B cell (primary cell): ENCODE measurements at regions of chrX and their contacts with region 1.

Region 1: DNA sequence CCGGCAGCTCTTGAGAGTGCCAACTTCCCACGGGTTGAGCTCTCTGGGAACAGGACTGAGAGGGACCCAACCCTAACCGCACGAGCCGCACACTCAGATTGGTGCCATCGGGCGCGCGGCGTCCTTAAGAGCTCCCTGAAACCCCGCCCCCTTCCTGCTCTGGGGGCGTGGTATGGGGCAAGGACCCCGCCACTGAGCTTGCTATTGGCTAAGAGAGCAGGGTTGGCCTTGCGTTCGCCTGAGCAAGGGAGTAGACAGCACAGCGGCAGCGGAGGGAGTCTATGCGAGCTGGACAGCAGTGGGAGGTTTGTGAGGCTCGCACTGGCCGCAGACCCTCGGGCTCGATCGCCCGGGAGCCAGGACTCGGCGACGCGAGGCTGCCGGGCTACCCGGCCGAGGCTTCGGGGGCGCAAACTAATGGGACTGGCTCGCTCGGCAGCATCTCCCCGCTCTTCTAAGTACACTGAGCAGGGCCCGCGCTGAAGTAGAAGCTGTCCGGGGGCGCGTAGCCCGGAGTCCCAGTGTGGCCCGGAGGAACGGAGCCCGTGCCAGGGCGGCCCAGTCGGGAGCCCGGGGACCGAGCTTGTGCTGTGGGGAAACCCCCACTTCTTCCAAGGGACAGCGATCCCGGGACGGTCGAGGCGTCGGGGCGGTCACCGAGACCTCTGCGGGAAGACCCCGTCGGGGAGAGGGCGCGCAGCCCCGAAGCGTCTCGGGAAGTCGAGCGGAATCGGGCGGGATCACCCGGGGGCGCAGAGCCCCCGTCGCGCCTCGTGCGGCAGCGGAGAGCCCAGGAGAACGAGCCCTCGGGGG is at the start of gene EFNB1:
- DNase-seq: peak; percentile 91
- ATAC-seq: peak; percentile 92
- H3K4me3 ChIP-seq: peak within 1 kb of the TSS; percentile 58 to 80 (median 75)
- H3K4me3 Mint-ChIP-seq: peak within 1 kb of the TSS; percentile 97
- H3K27ac ChIP-seq: no peak within 1 kb of the TSS
- H3K27ac Mint-ChIP-seq: peak within 1 kb of the TSS; percentile 77
- H3K4me1 ChIP-seq: peaks cover 12 to 34% of the 10 kb centered on the region in 2 donors
- H3K4me1 Mint-ChIP-seq: peaks cover 23% of the 10 kb centered on the region
- H3K27me3 ChIP-seq: peaks cover 0 to 11% (median 4%) of the 10 kb centered on the region in 4 experiments
- H3K27me3 Mint-ChIP-seq: no peaks in the 10 kb centered on the region
- CTCF ChIP-seq: no peak
- total RNA-seq, gene EFNB1: 3.2 and 3.5 TPM in 2 replicates

Region 2: DNA sequence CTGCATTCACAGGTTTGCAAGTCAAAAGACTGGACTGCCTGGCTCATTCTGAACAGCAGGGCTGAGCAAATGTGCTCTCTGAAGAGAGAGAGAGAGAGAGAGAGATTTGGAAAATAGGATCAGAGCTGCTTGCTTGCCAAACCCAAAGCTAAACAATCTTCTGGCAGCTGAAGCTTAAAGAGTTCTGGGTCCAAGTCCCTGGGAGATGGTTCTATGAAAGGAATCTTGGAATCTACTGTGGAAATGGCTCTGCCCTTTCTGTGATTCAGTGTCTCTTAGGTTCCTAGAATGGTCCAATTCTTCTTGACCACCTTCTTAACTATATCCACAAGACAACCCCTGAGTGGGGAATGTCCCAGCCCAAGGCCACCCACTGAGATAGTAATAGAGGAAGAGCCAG is 66.2 kb before region 1 on chrX:
- CTCF ChIA-PET with region 1: no interaction called
- POLR2A ChIA-PET with region 1: no interaction called
- intact Hi-C with region 1: no loop called
- DNase-seq: no peak
- ATAC-seq: no peak
- H3K4me3 ChIP-seq: no peak overlapping the region
- H3K4me3 Mint-ChIP-seq: no peak overlapping the region
- H3K27ac ChIP-seq: no peak overlapping the region
- H3K27ac Mint-ChIP-seq: no peak overlapping the region
- H3K4me1 ChIP-seq: no peaks in the 10 kb centered on the region
- H3K4me1 Mint-ChIP-seq: no peaks in the 10 kb centered on the region
- H3K27me3 ChIP-seq: no peaks in the 10 kb centered on the region
- H3K27me3 Mint-ChIP-seq: peaks cover 3% of the 10 kb centered on the region
- CTCF ChIP-seq: no peak

Region 3: GRCh38 chrX:68794461-68794860 is 34.5 kb before region 1 on chrX:
- CTCF ChIA-PET with region 1: no interaction called
- POLR2A ChIA-PET with region 1: no interaction called
- intact Hi-C with region 1: no loop called
- DNase-seq: no peak
- ATAC-seq: no peak
- H3K4me3 ChIP-seq: no peak overlapping the region
- H3K4me3 Mint-ChIP-seq: no peak overlapping the region
- H3K27ac ChIP-seq: no peak overlapping the region
- H3K27ac Mint-ChIP-seq: no peak overlapping the region
- H3K4me1 ChIP-seq: no peaks in the 10 kb centered on the region
- H3K4me1 Mint-ChIP-seq: no peaks in the 10 kb centered on the region
- H3K27me3 ChIP-seq: no peaks in the 10 kb centered on the region
- H3K27me3 Mint-ChIP-seq: no peaks in the 10 kb centered on the region
- CTCF ChIP-seq: no peak

Region 4: DNA sequence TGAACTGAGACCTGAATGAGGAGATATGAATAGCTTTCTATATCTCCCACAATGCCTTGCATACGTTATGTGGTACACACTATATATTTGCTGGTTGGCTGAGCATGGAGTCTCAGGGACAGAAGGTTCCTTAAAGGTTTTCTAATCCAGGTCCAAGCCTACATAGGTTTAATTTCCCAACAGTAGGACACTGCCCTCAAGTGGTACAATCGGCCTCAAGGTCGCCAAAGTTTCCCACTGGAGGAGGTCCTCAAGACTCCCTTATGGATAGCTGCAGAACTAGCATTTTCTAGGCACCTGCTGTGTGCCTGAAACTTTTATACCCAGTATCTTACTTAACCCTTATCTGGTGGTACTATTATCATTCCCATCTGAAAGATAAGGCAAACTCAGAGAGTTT is 21.1 kb before region 1 on chrX:
- CTCF ChIA-PET with region 1: no interaction called
- POLR2A ChIA-PET with region 1: no interaction called
- intact Hi-C with region 1: no loop called
- DNase-seq: no peak
- ATAC-seq: no peak
- H3K4me3 ChIP-seq: no peak overlapping the region
- H3K4me3 Mint-ChIP-seq: no peak overlapping the region
- H3K27ac ChIP-seq: no peak overlapping the region
- H3K27ac Mint-ChIP-seq: no peak overlapping the region
- H3K4me1 ChIP-seq: no peaks in the 10 kb centered on the region
- H3K4me1 Mint-ChIP-seq: no peaks in the 10 kb centered on the region
- H3K27me3 ChIP-seq: peaks cover 0 to 4% (median 0%) of the 10 kb centered on the region in 4 experiments
- H3K27me3 Mint-ChIP-seq: peaks cover 11% of the 10 kb centered on the region
- CTCF ChIP-seq: no peak

Region 5: DNA sequence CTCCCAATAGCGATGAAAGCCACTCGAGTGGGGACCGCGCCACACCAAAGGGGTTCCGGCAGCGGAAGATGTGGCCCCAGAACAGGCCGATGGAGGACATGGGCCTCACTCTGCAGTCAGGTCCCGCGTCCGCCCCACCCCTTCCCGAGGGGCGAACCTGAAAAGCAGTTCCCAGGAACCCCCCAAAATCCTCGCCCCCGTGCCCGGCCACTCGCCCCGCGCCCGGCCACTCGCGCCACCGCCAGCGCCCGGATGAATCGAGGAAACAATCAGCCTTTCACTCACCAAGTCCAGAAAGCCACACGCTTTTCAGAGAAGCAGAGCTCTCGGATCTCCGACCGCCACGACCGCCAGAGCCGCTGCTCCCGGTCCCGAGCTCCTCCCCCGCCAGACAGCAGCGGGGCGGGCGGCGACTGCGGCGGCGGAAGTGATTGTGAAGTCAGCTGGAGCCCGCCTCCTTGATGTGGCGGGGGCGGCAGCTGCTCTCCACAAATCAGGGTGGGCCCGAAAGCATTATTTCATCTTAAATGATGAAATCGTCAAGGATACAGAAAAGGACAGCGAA is 336.2 kb after region 1 on chrX and contains the start of gene PJA1:
- CTCF ChIA-PET with region 1: interaction called, 14 read pairs
- POLR2A ChIA-PET with region 1: no interaction called
- intact Hi-C with region 1: loop called (anchors 2 kb)
- DNase-seq: peak; percentile 76
- ATAC-seq: peak; percentile 84
- H3K4me3 ChIP-seq: peak within 1 kb of the TSS; percentile 49 to 79 (median 69)
- H3K4me3 Mint-ChIP-seq: peak within 1 kb of the TSS; percentile 94
- H3K27ac ChIP-seq: peak within 1 kb of the TSS; percentile 24 to 70
- H3K27ac Mint-ChIP-seq: peak within 1 kb of the TSS; percentile 93
- H3K4me1 ChIP-seq: peaks cover 0 to 8% of the 10 kb centered on the region in 2 donors
- H3K4me1 Mint-ChIP-seq: peaks cover 16% of the 10 kb centered on the region
- H3K27me3 ChIP-seq: no peaks in the 10 kb centered on the region
- H3K27me3 Mint-ChIP-seq: no peaks in the 10 kb centered on the region
- CTCF ChIP-seq: no peak
- total RNA-seq, gene PJA1: 21.3 and 25.7 TPM in 2 replicates

Region 6: DNA sequence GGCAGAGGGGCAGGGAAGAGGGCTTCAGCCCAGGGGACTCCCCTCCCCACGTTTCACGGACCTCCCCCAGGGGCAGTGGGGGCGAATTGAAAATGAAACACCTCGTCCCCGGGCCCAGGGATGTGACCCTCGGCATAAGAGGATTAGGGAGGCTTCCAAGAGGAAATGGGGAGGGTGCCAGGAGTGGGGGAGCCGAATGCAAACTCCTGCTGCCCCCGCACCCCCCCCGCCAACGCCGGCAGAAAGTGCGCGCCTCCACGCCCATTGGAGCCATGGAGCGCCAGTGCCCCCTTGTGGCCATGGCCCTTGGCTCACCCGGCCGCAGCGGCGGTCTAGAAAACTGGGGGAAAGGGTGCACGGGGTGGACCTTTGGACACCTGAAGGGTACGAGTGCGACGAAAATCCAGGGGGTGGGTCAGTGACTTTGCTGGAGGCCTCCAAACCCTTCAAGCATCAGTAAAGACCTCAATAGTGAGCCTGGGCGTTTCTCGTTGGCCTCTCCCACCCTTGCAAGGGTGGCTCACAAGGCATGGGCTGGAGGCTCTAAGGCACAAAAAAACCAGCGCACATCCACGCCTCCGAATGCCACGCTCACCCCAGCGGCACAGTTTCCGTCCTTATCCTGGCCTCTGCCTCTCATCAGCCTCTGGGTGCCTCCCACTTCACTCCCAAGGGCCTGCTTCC is 457.1 kb after region 1 on chrX:
- CTCF ChIA-PET with region 1: interaction called, 33 read pairs
- POLR2A ChIA-PET with region 1: no interaction called
- intact Hi-C with region 1: loop called (anchors 1 kb)
- DNase-seq: peak; percentile 61
- ATAC-seq: peak; percentile 75
- H3K4me3 ChIP-seq: peak overlapping the region in 4 of 5 experiments; percentile 24 to 58 (median 48)
- H3K4me3 Mint-ChIP-seq: peak overlapping the region; percentile 44
- H3K27ac ChIP-seq: no peak overlapping the region
- H3K27ac Mint-ChIP-seq: no peak overlapping the region
- H3K4me1 ChIP-seq: peaks cover 9% of the 10 kb centered on the region in 2 donors
- H3K4me1 Mint-ChIP-seq: no peaks in the 10 kb centered on the region
- H3K27me3 ChIP-seq: peaks cover 0 to 2% (median 0%) of the 10 kb centered on the region in 4 experiments
- H3K27me3 Mint-ChIP-seq: no peaks in the 10 kb centered on the region
- CTCF ChIP-seq: peak; percentile 74

Region 7: GRCh38 chrX:69615779-69616456 is 787.0 kb after region 1 on chrX and contains the start of gene EDA:
- CTCF ChIA-PET with region 1: no interaction called
- POLR2A ChIA-PET with region 1: interaction called, 9 read pairs
- intact Hi-C with region 1: loop called (anchors 5 kb)
- DNase-seq: peak; percentile 40
- ATAC-seq: peak; percentile 94
- H3K4me3 ChIP-seq: peak within 1 kb of the TSS in 3 of 5 experiments; percentile 32 to 43 (median 33)
- H3K4me3 Mint-ChIP-seq: peak within 1 kb of the TSS; percentile 84
- H3K27ac ChIP-seq: no peak within 1 kb of the TSS
- H3K27ac Mint-ChIP-seq: peak within 1 kb of the TSS; percentile 46
- H3K4me1 ChIP-seq: peaks cover 0 to 7% of the 10 kb centered on the region in 2 donors
- H3K4me1 Mint-ChIP-seq: peaks cover 5% of the 10 kb centered on the region
- H3K27me3 ChIP-seq: peaks cover 0 to 16% (median 6%) of the 10 kb centered on the region in 4 experiments
- H3K27me3 Mint-ChIP-seq: peaks cover 28% of the 10 kb centered on the region
- CTCF ChIP-seq: no peak
- total RNA-seq, gene EDA: 0.24 and 1.2 TPM in 2 replicates

Region 8: DNA sequence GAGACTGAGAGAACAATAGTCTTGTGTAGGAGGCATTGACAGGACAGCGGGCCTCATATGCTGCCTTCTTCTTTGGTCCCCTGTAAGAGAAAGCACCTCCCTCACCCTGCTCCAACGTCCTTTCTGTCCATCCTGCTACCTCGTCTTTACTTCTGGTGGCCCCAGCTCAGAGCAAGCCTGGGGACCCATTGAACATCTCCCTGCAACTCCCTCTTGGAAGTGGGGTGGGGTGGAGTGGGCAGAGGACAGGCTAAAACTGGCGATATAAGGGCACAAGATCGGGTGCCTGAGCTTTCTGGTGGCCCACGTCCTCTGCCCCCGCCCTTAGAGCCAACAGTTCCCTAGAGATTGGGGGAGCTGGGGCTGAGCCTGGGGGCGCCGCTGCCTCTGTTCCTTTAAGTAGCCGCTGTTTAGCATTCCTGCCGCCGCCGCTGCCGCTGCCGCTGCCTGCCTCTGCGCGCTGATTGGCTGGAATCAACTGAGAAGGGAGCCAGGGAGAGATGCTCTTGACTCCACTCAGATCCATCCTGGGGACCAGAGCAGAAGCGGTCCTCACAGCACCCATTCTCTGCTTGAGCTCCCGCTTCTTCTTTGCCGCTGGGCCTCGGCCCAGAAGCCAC is 1615.5 kb after region 1 on chrX and contains the start of gene DLG3:
- CTCF ChIA-PET with region 1: no interaction called
- POLR2A ChIA-PET with region 1: no interaction called
- intact Hi-C with region 1: loop called (anchors 5 kb)
- DNase-seq: peak; percentile 34
- ATAC-seq: peak; percentile 49
- H3K4me3 ChIP-seq: peak within 1 kb of the TSS in 3 of 5 experiments; percentile 21 to 33 (median 33)
- H3K4me3 Mint-ChIP-seq: peak within 1 kb of the TSS; percentile 78
- H3K27ac ChIP-seq: no peak within 1 kb of the TSS
- H3K27ac Mint-ChIP-seq: no peak within 1 kb of the TSS
- H3K4me1 ChIP-seq: peaks cover 4 to 10% of the 10 kb centered on the region in 2 donors
- H3K4me1 Mint-ChIP-seq: peaks cover 5% of the 10 kb centered on the region
- H3K27me3 ChIP-seq: peaks cover 0 to 17% (median 10%) of the 10 kb centered on the region in 4 experiments
- H3K27me3 Mint-ChIP-seq: peaks cover 24% of the 10 kb centered on the region
- CTCF ChIP-seq: no peak
- total RNA-seq, gene DLG3: 6.9 and 7.4 TPM in 2 replicates